Keratinocyte (primary cell): ENCODE measurements at regions of chr10 and their contacts with region 1.

Region 1: GRCh38 chr10:70355051-70356021 is 27.1 kb downstream of the LRRC20 start:
- DNase-seq: no peak
- H3K4me3 ChIP-seq: no peak overlapping the region
- H3K27ac ChIP-seq: no peak overlapping the region
- H3K4me1 ChIP-seq: no peaks in the 10 kb centered on the region
- H3K27me3 ChIP-seq: no peaks in the 10 kb centered on the region
- CTCF ChIP-seq: no peak

Region 2: GRCh38 chr10:70324339-70324861 is 30.9 kb before region 1 on chr10:
- dilution Hi-C with region 1: loop called (anchors 5 kb)
- DNase-seq: no peak
- H3K4me3 ChIP-seq: no peak overlapping the region
- H3K27ac ChIP-seq: no peak overlapping the region
- H3K4me1 ChIP-seq: no peaks in the 10 kb centered on the region
- H3K27me3 ChIP-seq: no peaks in the 10 kb centered on the region
- CTCF ChIP-seq: no peak